Activated CD4-positive, alpha-beta T cell treated with anti-CD3 and anti-CD28 coated beads, Interleukin-2, amount 10 ng/mL, durations not matched to agents 24 days and 14 days (primary cell): ENCODE measurements at regions of chr5 and their contacts with region 1.

Region 1: DNA sequence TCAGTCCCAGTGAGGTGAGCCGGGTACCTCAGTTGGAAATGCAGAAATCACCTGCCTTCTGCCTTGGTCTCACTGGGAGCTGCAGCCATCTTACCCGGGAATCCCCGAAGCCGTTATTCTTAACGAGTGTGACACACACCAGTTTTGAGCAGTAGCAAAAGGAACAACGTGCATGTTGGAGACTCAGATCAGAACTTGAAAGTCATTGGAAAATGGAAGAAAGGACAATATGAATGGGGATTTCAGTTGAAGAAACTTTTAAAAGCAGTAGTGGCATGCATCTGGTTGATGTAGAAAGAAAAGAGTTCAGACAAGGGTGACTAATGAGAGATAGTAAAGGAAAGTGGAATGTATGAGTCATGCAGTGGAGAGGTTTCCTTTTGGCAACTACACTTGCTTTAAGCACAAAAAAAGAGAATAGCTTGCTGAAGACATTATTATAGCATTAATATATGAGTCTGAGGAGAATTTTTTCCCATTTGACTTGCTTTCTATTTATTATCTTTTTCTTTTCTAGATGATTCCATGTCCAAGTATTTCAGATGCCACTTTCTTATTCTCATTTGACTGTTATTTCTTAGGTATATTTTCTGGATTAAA is 44.4 kb upstream of the ANKDD1B start:
- DNase-seq: peak; percentile 83
- H3K4me3 Mint-ChIP-seq: peak overlapping the region; percentile 84
- H3K27ac Mint-ChIP-seq: peak overlapping the region; percentile 98
- H3K4me1 Mint-ChIP-seq: peaks cover 39% of the 10 kb centered on the region
- H3K27me3 Mint-ChIP-seq: peaks cover 2% of the 10 kb centered on the region

Region 2: DNA sequence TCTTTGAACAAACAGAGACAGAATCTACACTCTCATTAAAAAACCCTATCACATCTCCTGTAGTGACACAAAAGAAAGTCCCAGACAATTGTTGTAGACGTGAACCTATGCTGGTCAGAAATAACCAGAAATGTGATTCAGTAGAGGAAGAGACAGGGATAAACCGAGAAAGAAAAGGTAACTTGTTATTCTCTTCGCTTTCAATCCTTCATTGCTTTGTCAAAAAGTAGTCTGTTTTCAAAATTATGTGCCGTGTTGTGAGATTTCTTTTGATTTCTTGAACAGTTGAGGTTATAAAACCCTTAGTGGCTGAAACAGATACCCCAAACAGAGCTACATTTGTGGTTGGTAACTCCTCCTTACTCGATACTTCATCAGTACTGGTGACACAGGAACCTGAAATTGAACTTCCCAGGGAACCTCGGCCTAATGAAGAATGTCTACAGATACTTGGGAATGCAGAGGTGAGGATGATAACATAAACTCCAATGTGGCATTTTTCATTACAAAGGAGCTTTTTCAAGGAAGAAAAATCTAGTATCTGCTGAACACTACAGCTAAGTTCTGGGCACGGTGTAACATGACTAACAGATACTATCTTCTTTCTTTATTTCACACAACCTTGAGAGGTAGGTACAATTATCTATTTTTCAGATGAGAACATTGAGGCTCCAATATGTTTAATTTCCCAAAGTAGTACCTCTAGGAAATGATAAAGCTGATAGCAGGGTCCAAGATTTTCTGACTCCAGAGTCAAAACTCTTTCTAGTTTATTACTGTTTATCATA is 215.5 kb before region 1 on chr5:
- intact Hi-C with region 1: loop called (anchors 2 kb)
- DNase-seq: no peak
- H3K4me3 Mint-ChIP-seq: peak overlapping the region; percentile 3
- H3K27ac Mint-ChIP-seq: peak overlapping the region; percentile 78
- H3K4me1 Mint-ChIP-seq: peaks cover 23% of the 10 kb centered on the region
- H3K27me3 Mint-ChIP-seq: no peaks in the 10 kb centered on the region

Region 3: DNA sequence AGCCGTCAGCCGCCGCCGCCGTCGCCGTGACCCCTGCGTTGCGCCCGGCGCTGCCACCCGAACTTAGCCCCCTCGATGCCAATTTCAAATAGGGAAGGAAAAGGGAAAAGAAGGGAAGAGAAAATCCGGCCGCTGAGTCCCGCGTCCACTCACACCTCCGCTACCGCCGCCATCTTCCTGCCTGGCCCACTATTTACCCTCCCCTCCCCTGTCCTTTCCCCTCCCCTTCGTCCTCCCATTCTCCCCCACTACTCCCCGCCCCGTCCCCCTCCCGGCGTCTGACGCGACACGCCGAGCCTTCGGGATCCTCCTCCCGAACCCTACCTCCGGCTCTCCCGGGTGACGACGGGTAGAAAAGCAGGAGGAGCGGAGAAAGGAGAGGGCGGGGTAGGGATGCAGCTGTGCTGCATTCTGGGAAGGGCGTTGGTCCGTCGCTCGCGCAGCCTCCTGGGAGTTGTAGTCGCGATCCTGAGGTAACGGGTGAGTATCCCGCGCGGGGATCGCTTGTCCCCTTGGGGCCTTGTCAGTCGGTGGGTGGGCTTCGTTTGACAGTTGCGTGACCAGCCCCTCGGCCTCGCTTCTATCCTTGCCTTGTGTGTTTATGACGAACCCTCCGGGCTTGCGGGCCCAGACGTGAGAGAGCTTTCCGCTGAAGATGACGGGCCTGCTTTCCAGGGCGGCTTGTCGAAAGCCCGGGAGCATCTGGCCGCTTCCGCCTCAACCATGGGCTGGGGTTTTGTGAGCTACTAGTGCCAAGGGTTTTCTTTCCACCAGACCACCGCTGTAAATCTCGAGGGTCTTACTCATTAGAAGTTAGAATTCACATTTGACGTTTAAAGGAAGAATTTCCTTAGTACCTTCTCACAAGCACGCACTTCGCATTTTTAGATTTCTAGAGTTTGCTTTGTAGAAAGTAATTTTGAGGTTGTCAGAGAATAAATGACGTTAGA is 55.1 kb before region 1 on chr5 and contains the starts of genes CERT1 and POLK:
- intact Hi-C with region 1: loop called (anchors 1 kb)
- DNase-seq: peak; percentile 99
- H3K4me3 Mint-ChIP-seq: peak within 1 kb of the TSS; percentile 95
- H3K27ac Mint-ChIP-seq: peak within 1 kb of the TSS; percentile 96
- H3K4me1 Mint-ChIP-seq: peaks cover 40% of the 10 kb centered on the region
- H3K27me3 Mint-ChIP-seq: no peaks in the 10 kb centered on the region
- total RNA-seq, gene CERT1: 46.4 and 49.2 TPM in 2 replicates
- total RNA-seq, gene POLK: 40.4 and 41.6 TPM in 2 replicates

Region 4: GRCh38 chr5:75601996-75602395 is 35.2 kb after region 1 on chr5:
- intact Hi-C with region 1: loop called (anchors 2 kb)
- DNase-seq: peak; percentile 48
- H3K4me3 Mint-ChIP-seq: no peak overlapping the region
- H3K27ac Mint-ChIP-seq: no peak overlapping the region
- H3K4me1 Mint-ChIP-seq: peaks cover 25% of the 10 kb centered on the region
- H3K27me3 Mint-ChIP-seq: no peaks in the 10 kb centered on the region

Region 5: DNA sequence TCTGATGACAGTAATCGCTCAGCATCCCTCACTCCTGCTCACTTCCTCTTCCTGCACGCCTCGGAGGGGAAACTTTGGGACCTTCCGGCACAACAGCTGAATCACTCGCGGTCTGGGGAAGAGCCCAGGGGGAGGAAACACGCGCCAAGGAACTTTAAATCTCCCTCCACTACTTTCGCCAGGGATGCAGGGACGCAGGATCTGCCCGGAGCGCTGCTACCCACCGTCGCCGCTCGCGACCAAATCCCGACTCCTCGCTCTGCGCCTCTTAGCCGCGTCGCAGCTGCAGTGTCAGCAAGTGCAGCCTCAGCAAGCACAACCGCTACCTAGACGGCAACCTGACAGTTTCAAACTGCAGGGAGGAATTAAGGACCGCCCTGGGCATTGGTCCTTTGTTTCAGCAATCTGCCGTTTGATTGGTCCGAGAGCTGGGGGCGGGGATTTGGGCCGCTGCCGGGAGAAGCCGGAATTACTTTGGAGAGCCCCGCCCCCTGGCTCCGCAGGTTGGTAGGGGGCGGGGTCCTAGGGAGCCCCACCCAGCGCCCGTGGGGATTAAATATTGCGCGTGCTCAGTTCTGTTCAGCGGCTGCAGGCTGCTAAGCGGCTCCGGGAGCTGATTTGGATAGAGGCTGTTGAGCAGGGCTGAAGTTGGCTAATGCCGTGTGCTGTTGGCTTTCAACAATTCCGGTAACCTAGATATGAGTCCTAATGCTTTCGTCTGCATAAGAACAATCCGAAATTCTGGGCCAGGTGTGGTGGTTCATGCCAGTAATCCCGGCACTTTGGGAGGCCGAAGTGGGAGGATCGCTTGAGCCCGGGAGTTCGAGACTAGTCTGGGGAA is 150.5 kb after region 1 on chr5 and contains the start of gene POC5:
- intact Hi-C with region 1: loop called (anchors 1 kb)
- DNase-seq: peak; percentile 99
- H3K4me3 Mint-ChIP-seq: peak within 1 kb of the TSS; percentile 100
- H3K27ac Mint-ChIP-seq: peak within 1 kb of the TSS; percentile 100
- H3K4me1 Mint-ChIP-seq: peaks cover 29% of the 10 kb centered on the region
- H3K27me3 Mint-ChIP-seq: peaks cover 7% of the 10 kb centered on the region
- total RNA-seq, gene POC5: 20.8 and 21.3 TPM in 2 replicates